HepG2 (cell line): ENCODE measurements at regions of chr6 and their contacts with region 1.

Region 1: GRCh38 chr6:32984605-32985389 is 16.4 kb downstream of the BRD2 start:
- DNase-seq: peak; percentile 84
- ATAC-seq: peak; percentile 73
- H3K4me3 ChIP-seq: no peak overlapping the region
- H3K27ac ChIP-seq: no peak overlapping the region
- H3K4me1 ChIP-seq: no peaks in the 10 kb centered on the region
- H3K27me3 ChIP-seq: peaks cover 0 to 6% of the 10 kb centered on the region in 2 experiments; a peak in 2 of 5 replicates
- CTCF ChIP-seq: peak; percentile 96
- EP300 ChIP-seq: no peak
- POLR2A ChIP-seq: no peak
- RAD21 ChIP-seq: peak; percentile 90

Region 2: DNA sequence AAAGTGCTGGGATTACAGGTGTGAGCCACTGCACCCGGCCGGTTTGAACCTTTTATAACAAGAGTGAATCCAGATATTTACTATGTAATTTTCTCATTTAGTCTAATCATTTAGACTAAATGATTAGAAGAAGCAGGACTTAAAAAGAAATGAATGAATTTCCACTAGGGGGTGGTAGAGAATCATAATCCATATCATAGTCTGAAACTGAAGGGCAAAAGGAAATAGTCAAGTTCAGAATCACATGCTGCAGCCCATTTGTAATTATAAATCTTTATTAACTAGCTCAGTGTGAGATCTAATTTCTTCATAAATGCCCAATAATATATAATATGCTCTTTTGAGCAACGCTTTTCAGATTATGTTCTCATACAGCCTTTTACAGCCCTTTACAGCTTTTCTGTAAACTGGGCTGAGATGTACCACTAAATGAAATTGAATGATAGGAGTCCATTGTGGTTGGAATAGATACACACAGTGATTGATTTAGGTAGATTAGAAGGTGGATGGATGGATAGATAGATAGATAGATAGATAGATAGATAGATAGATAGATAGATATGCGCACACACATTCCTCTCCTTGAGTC is 99.0 kb before region 1 on chr6:
- CTCF ChIA-PET with region 1: interaction called, 48 read pairs
- POLR2A ChIA-PET with region 1: interaction called, 4 read pairs
- in situ Hi-C with region 1: loop called (anchors 5 kb)
- intact Hi-C with region 1: loop called (anchors 1 kb)
- DNase-seq: peak; percentile 77
- ATAC-seq: peak; percentile 67
- H3K4me3 ChIP-seq: no peak overlapping the region
- H3K27ac ChIP-seq: no peak overlapping the region
- H3K4me1 ChIP-seq: no peaks in the 10 kb centered on the region
- H3K27me3 ChIP-seq: peaks cover 0 to 36% of the 10 kb centered on the region in 2 experiments; a peak in 2 of 5 replicates
- CTCF ChIP-seq: peak; percentile 68
- EP300 ChIP-seq: no peak
- POLR2A ChIP-seq: no peak
- RAD21 ChIP-seq: peak; percentile 67

Region 3: DNA sequence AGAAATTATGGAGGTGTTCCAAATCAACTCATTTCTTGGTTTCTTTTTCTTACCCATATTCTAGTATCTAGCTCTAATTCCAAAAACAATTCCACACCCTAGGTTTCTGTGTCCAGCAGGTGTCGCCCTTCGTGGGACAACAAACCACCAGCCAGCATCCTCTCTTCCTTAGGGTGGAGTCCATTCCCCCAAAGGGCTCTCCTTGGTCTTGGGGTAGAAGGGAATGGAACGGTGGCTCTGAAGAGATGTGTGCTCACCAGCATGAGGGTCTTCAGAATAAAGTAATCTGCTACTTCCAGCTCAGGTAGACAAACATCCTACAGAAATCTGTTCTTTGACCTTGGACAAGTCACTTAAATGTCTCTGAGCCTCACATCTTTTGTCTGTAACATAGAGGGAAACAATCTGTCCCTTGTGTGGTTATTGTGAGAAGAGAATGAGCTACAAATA is 51.1 kb before region 1 on chr6:
- CTCF ChIA-PET with region 1: interaction called, 103 read pairs
- POLR2A ChIA-PET with region 1: interaction called, 15 read pairs
- in situ Hi-C with region 1: loop called (anchors 5 kb)
- intact Hi-C with region 1: loop called (anchors 1 kb)
- DNase-seq: peak; percentile 67
- ATAC-seq: peak; percentile 65
- H3K4me3 ChIP-seq: no peak overlapping the region
- H3K27ac ChIP-seq: no peak overlapping the region
- H3K4me1 ChIP-seq: peaks cover 16% of the 10 kb centered on the region
- H3K27me3 ChIP-seq: peaks cover 2 to 28% of the 10 kb centered on the region in 2 experiments; a peak in 3 of 5 replicates
- CTCF ChIP-seq: peak; percentile 85
- EP300 ChIP-seq: no peak
- POLR2A ChIP-seq: no peak
- RAD21 ChIP-seq: peak; percentile 69

Region 4: GRCh38 chr6:32947552-32948465 is 37.0 kb before region 1 on chr6:
- CTCF ChIA-PET with region 1: interaction called, 11 read pairs
- POLR2A ChIA-PET with region 1: interaction called, 6 read pairs
- in situ Hi-C with region 1: no loop called
- intact Hi-C with region 1: no loop called
- DNase-seq: peak; percentile 58
- ATAC-seq: peak; percentile 83
- H3K4me3 ChIP-seq: no peak overlapping the region
- H3K27ac ChIP-seq: no peak overlapping the region
- H3K4me1 ChIP-seq: peaks cover 3% of the 10 kb centered on the region; the same call in 1 of the 2 replicates
- H3K27me3 ChIP-seq: peaks cover 3 to 13% of the 10 kb centered on the region in 2 experiments; a peak in 2 of 5 replicates
- CTCF ChIP-seq: peak; percentile 91
- EP300 ChIP-seq: no peak
- POLR2A ChIP-seq: no peak
- RAD21 ChIP-seq: peak; percentile 82

Region 5: GRCh38 chr6:33000055-33000454 is 15.3 kb after region 1 on chr6:
- CTCF ChIA-PET with region 1: no interaction called
- POLR2A ChIA-PET with region 1: no interaction called
- in situ Hi-C with region 1: no loop called
- intact Hi-C with region 1: no loop called
- DNase-seq: peak; percentile 33
- ATAC-seq: peak; percentile 71
- H3K4me3 ChIP-seq: no peak overlapping the region
- H3K27ac ChIP-seq: no peak overlapping the region
- H3K4me1 ChIP-seq: no peaks in the 10 kb centered on the region
- H3K27me3 ChIP-seq: peaks cover 0 to 36% of the 10 kb centered on the region in 2 experiments; a peak in 3 of 5 replicates
- CTCF ChIP-seq: peak; percentile 55
- EP300 ChIP-seq: no peak
- POLR2A ChIP-seq: no peak
- RAD21 ChIP-seq: no peak

Region 6: GRCh38 chr6:33126101-33126714 is 141.4 kb after region 1 on chr6:
- CTCF ChIA-PET with region 1: no interaction called
- POLR2A ChIA-PET with region 1: no interaction called
- in situ Hi-C with region 1: no loop called
- intact Hi-C with region 1: no loop called
- DNase-seq: peak; percentile 50
- ATAC-seq: peak; percentile 77
- H3K4me3 ChIP-seq: no peak overlapping the region
- H3K27ac ChIP-seq: no peak overlapping the region
- H3K4me1 ChIP-seq: peaks cover 34% of the 10 kb centered on the region
- H3K27me3 ChIP-seq: no peaks in the 10 kb centered on the region; a peak in 1 of 5 replicates
- CTCF ChIP-seq: peak; percentile 68
- EP300 ChIP-seq: no peak
- POLR2A ChIP-seq: no peak
- RAD21 ChIP-seq: 0 out of 2 replicates have a peak, but pooled peaks have one; percentile 22